Activated CD8-positive, alpha-beta T cell treated with anti-CD3 and anti-CD28 coated beads for 36 hours (primary cell): ENCODE measurements at regions of chrX and their contacts with region 1.

Region 1: GRCh38 chrX:107654872-107655761 is 26.8 kb downstream of the PRPS1 start:
- DNase-seq: peak; percentile 67
- ATAC-seq: peak; percentile 94
- H3K4me3 Mint-ChIP-seq: no peak overlapping the region
- H3K27ac Mint-ChIP-seq: peak overlapping the region; percentile 73
- H3K4me1 Mint-ChIP-seq: peaks cover 14% of the 10 kb centered on the region
- H3K27me3 Mint-ChIP-seq: no peaks in the 10 kb centered on the region
- CTCF ChIP-seq: peak; percentile 72

Region 2: DNA sequence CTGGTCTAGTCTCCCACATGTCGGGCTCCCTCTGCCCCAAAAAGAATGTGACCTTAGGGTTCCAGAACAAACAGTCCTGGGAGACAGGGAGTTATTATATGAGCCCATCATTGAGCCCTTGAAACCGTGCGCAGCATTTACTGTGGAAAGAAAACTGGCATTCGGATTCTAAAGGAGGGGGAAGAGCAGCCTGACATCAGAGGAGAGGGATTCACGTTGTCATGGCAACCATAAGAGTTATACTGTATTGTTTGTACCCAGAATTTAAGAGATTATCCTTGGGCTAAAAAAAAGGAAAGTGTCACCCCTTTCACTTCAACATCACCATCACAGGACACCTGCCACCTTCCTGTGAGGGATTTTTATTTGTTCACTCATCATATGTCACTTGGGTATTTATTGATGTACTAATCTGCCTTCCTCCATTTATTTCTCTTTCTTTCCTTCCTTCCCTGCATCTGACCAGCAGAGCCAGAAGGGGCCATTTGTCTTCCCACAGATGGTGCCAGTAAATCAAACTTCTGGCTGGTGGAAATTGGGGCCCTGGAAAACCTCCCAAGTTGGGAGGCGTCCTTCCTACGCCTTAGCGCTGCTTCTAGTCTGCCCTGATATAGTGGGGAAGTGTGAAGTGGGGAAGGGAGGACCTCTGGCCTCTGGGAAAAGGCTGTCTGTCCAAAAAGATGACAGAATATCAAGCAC is 270.6 kb before region 1 on chrX:
- CTCF ChIA-PET with region 1: no interaction called
- POLR2A ChIA-PET with region 1: no interaction called
- intact Hi-C with region 1: no loop called
- DNase-seq: no peak
- ATAC-seq: no peak
- H3K4me3 Mint-ChIP-seq: no peak overlapping the region
- H3K27ac Mint-ChIP-seq: no peak overlapping the region
- H3K4me1 Mint-ChIP-seq: peaks cover 7% of the 10 kb centered on the region
- H3K27me3 Mint-ChIP-seq: peaks cover 12% of the 10 kb centered on the region
- CTCF ChIP-seq: no peak

Region 3: DNA sequence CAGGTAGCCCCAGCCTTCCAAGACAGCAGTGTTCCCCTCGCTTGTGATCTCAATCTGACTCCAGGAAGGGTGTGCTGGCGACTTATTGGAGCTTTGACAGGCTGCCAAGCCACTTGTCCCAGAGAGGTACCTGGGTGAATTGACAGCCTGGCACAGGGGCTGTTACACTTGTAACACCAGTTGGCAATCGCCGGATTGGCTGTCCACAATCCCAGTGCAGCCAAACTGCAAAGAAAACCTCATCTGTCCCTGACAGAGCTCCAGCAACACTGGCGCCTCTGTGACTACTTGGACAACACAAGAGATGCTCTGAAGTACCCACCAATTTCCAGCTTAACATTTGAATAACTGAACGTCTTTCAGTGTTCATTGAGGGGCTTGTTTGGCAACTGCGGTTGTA is 103.6 kb before region 1 on chrX:
- CTCF ChIA-PET with region 1: no interaction called
- POLR2A ChIA-PET with region 1: no interaction called
- intact Hi-C with region 1: no loop called
- DNase-seq: no peak
- ATAC-seq: no peak
- H3K4me3 Mint-ChIP-seq: no peak overlapping the region
- H3K27ac Mint-ChIP-seq: no peak overlapping the region
- H3K4me1 Mint-ChIP-seq: peaks cover 10% of the 10 kb centered on the region
- H3K27me3 Mint-ChIP-seq: no peaks in the 10 kb centered on the region
- CTCF ChIP-seq: no peak

Region 4: DNA sequence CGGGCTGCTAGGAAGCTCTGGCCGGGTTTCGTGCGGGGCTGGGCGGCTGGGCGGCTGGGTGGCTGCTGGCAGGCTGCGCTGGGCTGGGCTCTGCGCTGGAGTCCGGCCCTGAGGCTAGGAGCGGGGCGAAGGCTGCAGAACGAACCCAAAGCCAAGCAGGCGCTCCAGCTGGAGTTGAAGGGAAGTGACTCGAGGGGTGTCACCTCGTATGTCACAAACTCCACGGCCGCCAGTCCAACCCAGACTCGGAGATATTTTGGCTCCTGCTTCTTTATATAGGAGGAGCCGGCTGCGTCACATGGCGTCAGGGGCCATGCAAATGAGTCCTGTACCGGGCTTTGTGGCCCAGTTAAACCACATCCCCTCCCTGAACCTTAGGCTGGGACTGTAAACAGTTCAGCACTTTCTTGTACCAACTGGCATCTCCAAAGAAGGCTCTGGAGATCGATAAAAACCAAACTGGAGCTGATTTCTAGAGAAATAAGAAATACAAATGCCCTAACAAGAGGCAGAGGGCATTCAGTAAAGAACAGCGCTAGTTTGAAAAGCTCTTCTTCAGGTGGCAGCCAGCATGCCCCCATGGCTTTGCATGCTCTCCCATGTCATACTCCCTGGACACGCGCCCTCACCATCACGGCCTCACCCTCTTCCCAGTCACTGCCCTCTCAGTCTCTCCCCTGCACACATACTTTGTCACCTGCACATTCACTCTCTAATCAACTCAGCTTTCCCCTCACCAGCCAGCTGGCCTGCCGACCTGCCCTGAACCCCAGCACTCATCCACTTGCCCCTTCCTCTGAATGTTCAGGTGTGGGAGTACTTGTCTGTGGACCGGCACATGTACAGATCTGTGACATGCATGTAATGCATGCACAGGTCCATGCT is 61.9 kb after region 1 on chrX:
- CTCF ChIA-PET with region 1: interaction called, 14 read pairs
- POLR2A ChIA-PET with region 1: interaction called, 3 read pairs
- intact Hi-C with region 1: no loop called
- DNase-seq: peak; percentile 88
- ATAC-seq: peak; percentile 79
- H3K4me3 Mint-ChIP-seq: peak overlapping the region; percentile 89
- H3K27ac Mint-ChIP-seq: peak overlapping the region; percentile 85
- H3K4me1 Mint-ChIP-seq: peaks cover 55% of the 10 kb centered on the region
- H3K27me3 Mint-ChIP-seq: no peaks in the 10 kb centered on the region
- CTCF ChIP-seq: no peak

Region 5: GRCh38 chrX:107894038-107894437 is 238.9 kb after region 1 on chrX:
- CTCF ChIA-PET with region 1: interaction called, 6 read pairs
- POLR2A ChIA-PET with region 1: no interaction called
- intact Hi-C with region 1: loop called (anchors 5 kb)
- DNase-seq: peak; percentile 13
- ATAC-seq: peak; percentile 85
- H3K4me3 Mint-ChIP-seq: no peak overlapping the region
- H3K27ac Mint-ChIP-seq: no peak overlapping the region
- H3K4me1 Mint-ChIP-seq: peaks cover 2% of the 10 kb centered on the region
- H3K27me3 Mint-ChIP-seq: no peaks in the 10 kb centered on the region
- CTCF ChIP-seq: peak; percentile 50

Region 6: DNA sequence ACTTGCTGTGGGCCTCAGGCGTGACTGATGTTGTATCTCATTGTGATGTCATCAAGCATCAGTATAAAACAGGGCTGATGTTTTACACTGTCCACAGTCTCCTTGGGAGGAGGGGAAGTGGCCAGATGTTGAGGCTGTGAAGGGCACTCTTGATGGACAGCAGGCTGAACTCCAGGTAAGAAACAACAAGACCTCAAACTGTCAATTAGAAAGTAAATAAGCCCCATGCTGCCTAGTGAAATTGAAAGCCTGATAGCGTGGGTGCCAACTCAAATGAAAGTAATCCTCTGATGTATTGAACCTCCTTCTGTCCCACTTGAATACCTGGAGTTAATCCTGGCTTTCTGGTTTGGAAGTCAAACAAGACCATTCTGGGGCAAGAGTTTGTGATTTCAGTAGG is 409.5 kb after region 1 on chrX:
- CTCF ChIA-PET with region 1: no interaction called
- POLR2A ChIA-PET with region 1: no interaction called
- intact Hi-C with region 1: no loop called
- DNase-seq: no peak
- ATAC-seq: no peak
- H3K4me3 Mint-ChIP-seq: no peak overlapping the region
- H3K27ac Mint-ChIP-seq: no peak overlapping the region
- H3K4me1 Mint-ChIP-seq: peaks cover 9% of the 10 kb centered on the region
- H3K27me3 Mint-ChIP-seq: no peaks in the 10 kb centered on the region
- CTCF ChIP-seq: no peak

Region 7: DNA sequence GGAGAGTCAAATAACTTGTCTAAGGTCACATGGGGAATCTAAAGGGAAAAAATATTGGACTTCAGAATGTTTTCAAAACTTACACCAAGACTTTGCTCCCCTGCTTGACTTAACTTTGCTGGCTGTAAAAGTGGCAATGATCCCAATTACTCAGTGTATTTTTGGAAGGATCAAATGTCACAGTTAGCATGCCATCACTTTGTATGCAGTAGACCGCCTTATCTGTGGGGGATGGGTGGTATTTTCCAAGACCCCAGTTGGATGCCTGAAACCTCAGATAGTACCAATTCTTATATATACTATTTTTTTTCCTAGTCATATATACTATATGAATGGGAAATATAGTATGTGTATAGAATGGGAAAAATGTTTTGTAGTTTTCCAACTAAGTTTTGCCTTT is 729.7 kb after region 1 on chrX:
- CTCF ChIA-PET with region 1: no interaction called
- POLR2A ChIA-PET with region 1: no interaction called
- intact Hi-C with region 1: no loop called
- DNase-seq: no peak
- ATAC-seq: no peak
- H3K4me3 Mint-ChIP-seq: no peak overlapping the region
- H3K27ac Mint-ChIP-seq: no peak overlapping the region
- H3K4me1 Mint-ChIP-seq: no peaks in the 10 kb centered on the region
- H3K27me3 Mint-ChIP-seq: no peaks in the 10 kb centered on the region
- CTCF ChIP-seq: no peak